Lower leg skin (tissue), 4 donors: ENCODE measurements at regions of chr22 and their contacts with region 1.

Region 1: DNA sequence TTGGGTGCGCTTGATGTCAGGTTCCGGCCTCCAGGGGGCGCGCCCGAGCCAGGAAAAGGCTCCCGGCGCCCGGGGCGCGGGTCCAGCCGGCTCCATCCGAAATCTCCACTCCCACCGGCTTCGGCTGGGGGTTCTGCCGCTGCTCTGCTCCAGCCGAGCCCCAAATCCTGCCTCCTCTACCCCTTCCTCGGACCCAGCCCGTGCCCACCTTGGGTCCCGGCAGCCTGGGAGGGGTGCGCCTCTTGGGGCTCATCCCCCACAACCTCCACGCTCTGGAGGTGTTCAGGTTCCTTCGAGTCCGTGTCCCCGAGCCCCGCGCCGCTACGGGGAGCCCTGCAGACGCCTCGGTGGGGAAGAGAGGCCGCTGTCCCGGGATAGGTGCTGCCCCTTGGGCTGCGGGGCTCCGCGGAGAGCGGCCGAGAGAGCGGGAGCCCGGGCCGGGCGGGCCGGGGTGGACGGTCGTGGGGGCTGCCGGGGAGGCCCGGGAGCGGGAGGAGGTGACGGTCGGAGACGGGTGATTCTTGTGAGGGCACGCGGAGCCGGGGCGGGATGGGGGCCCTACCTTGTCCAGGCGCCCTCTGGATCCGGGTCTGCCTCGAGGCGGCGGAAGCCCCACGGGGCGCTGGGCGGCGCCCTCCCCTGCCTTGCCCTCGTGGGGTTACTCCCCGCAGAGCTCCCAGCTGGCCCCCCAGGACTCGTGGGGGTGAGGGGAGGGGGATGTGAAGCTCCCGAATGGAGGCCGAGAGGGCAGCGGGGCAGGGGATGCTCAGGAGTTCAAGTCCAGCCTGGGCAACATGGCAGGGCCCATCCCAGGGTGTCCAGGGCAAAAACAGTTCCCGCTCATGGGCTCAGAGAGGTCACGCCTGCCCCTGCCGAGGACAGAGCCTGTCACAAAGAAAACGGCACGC is 13.2 kb upstream of the CYB5R3 start:
- DNase-seq: peak; percentile 71 to 95
- H3K4me3 ChIP-seq: peak overlapping the region; percentile 28
- CTCF ChIP-seq: no peak
- POLR2A ChIP-seq: no peak

Region 2: DNA sequence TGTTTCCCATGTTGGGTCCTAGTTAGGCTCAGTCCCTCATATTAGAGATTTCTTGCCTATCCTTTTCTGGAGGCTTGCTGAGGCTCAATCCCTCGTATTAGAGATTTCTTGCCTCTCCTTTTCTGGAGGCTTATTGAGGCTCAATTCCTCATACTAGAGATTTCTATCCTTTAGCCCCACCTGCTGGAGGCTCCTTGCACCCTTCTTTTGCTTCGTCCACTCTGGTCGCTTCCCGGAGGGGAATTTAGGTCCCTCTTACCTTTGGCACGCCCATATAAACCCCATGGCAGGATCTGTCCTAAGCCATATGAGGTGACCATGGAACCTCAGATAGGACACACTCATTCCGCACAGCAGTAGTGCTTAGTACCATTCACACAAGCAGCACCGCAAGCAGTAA is 547.6 kb before region 1 on chr22:
- intact Hi-C with region 1: no loop called
- DNase-seq: peak in 1 of 2 donors; percentile 64
- H3K4me3 ChIP-seq: no peak overlapping the region
- CTCF ChIP-seq: no peak
- POLR2A ChIP-seq: no peak

Region 3: DNA sequence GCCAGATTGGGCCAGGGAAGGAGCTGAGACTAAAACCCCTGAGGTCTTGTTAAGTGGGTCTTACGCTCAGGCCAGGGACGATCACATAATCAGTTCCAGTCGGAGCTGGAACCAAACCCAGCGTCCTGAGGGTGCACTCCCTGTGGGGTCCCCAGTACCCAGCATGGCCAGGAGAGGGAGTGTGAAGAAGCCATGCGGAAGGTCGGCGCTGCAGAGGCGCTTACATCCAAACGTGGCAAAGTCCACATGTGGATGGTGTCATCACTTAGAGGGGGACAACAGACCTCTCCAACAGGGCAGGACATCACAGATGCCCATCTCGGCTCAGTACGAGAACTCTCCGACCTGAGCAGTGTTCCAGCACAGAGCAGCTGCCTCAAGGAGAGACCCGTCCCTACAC is 30.3 kb before region 1 on chr22:
- intact Hi-C with region 1: no loop called
- DNase-seq: no peak
- H3K4me3 ChIP-seq: no peak overlapping the region
- CTCF ChIP-seq: no peak
- POLR2A ChIP-seq: no peak

Region 4: GRCh38 chr22:42780070-42780540 is 117.7 kb after region 1 on chr22:
- intact Hi-C with region 1: loop called (anchors 5 kb)
- DNase-seq: peak in 1 of 2 donors; percentile 86
- H3K4me3 ChIP-seq: no peak overlapping the region
- CTCF ChIP-seq: peak in 1 of 3 donors; percentile 88
- POLR2A ChIP-seq: no peak

Region 5: GRCh38 chr22:43088979-43089717 is 426.8 kb after region 1 on chr22 and contains the start of gene TTLL1:
- intact Hi-C with region 1: loop called (anchors 5 kb)
- DNase-seq: peak; percentile 76 to 96
- H3K4me3 ChIP-seq: peak within 1 kb of the TSS; percentile 48
- CTCF ChIP-seq: no peak
- POLR2A ChIP-seq: no peak
- total RNA-seq, gene TTLL1: 1.9 to 7.9 (median 5.4) TPM